Pancreas (tissue), 10 donors: ENCODE measurements at regions of chr18 and their contacts with region 1.

Region 1: GRCh38 chr18:22563098-22563707 is 145.5 kb upstream of the CTAGE1 start:
- DNase-seq: peak in 3 of 6 donors; percentile 22 to 52 (median 33)
- ATAC-seq: peak; percentile 71 to 81 (median 78)
- H3K4me3 ChIP-seq: no peak overlapping the region
- H3K27ac ChIP-seq: no peak overlapping the region
- H3K4me1 ChIP-seq: peaks cover 0 to 4% (median 3%) of the 10 kb centered on the region in 3 donors
- H3K27me3 ChIP-seq: no peaks in the 10 kb centered on the region
- CTCF ChIP-seq: peak; percentile 36 to 62 (median 45)

Region 2: DNA sequence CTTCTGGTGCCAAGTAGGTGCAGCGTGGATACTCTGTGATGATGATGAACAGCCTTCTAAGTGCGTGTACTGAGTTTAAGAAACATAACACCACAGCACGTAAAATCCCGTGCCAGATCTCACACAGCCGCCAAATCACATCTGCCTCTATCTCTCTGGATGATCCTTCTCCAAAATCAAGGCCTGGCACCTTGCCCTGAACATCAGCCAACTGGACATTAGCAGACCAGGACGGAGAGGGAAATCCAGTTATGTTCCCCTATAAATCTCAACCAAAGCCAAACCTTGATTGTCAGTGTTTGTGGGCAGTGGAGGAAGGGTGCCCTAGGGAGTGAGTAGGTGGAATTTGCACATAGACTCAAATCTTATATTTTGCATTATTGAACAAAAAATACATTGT is 658.3 kb before region 1 on chr18:
- intact Hi-C with region 1: loop called in 2 of 3 experiments (anchors 10 kb)
- DNase-seq: peak in 1 of 6 donors; percentile 19
- ATAC-seq: no peak
- H3K4me3 ChIP-seq: no peak overlapping the region
- H3K27ac ChIP-seq: no peak overlapping the region
- H3K4me1 ChIP-seq: no peaks in the 10 kb centered on the region
- H3K27me3 ChIP-seq: no peaks in the 10 kb centered on the region
- CTCF ChIP-seq: no peak

Region 3: DNA sequence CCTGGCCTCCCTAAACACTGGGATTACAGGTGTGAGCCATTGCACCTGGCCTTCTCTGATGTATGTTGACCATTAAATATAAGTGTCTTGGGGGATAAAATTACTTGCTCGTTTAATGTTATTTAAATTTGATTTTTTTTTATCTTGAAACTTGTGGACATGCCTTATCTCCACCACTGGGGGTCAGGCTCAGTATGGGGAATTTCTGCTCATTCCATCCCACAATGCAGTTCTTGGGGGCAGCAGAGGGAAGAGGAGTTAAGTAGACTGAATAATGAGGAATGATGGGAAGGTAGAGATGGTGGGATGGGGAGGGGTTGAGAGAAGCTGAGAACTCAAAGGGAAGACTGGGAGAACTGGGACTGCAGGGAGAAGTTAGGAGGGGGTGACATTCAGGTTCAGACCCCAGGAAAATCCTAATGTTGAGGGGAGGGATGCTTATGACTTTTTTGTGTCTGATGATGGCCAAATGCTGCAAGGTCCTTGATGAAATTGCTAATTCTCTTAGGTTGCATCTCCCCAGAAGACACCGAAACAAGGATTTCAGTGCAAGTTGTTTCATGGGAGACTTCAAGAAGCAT is 648.4 kb before region 1 on chr18:
- intact Hi-C with region 1: loop called in 1 of 3 experiments (anchors 10 kb)
- DNase-seq: peak in 3 of 6 donors; percentile 20 to 39 (median 32)
- ATAC-seq: peak; percentile 64 to 96 (median 90)
- H3K4me3 ChIP-seq: no peak overlapping the region
- H3K27ac ChIP-seq: no peak overlapping the region
- H3K4me1 ChIP-seq: no peaks in the 10 kb centered on the region
- H3K27me3 ChIP-seq: no peaks in the 10 kb centered on the region
- CTCF ChIP-seq: peak; percentile 24 to 47 (median 32)

Region 4: GRCh38 chr18:22503803-22504202 is 59.4 kb before region 1 on chr18:
- intact Hi-C with region 1: loop called in 1 of 3 experiments (anchors 10 kb)
- DNase-seq: no peak
- ATAC-seq: peak in 2 of 4 donors; percentile 30 to 39
- H3K4me3 ChIP-seq: no peak overlapping the region
- H3K27ac ChIP-seq: no peak overlapping the region
- H3K4me1 ChIP-seq: peaks cover 0 to 6% (median 0%) of the 10 kb centered on the region in 3 donors
- H3K27me3 ChIP-seq: no peaks in the 10 kb centered on the region
- CTCF ChIP-seq: no peak

Region 5: DNA sequence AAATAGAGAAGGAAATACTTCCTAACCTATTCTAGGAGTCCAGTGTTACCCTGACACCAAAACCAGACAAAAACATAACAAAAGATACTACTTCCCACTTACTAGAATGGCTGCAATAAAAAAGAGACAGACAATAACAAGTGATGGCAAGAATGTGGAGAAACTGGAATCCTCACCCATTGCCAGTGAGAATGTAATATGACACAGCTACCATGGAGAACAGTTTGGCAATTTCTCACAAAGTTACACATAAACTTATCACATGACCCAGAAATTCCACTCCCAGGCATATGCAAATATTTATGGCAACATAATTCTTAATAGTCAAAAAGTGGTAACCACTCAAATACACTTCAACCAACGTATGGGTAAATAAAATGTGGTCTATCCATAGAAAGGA is 64.3 kb after region 1 on chr18:
- intact Hi-C with region 1: no loop called
- DNase-seq: no peak
- ATAC-seq: no peak
- H3K4me3 ChIP-seq: no peak overlapping the region
- H3K27ac ChIP-seq: no peak overlapping the region
- H3K4me1 ChIP-seq: no peaks in the 10 kb centered on the region
- H3K27me3 ChIP-seq: no peaks in the 10 kb centered on the region
- CTCF ChIP-seq: no peak